ENCODE measurements at regions of chr1 and their contacts with region 1.

Region 1: DNA sequence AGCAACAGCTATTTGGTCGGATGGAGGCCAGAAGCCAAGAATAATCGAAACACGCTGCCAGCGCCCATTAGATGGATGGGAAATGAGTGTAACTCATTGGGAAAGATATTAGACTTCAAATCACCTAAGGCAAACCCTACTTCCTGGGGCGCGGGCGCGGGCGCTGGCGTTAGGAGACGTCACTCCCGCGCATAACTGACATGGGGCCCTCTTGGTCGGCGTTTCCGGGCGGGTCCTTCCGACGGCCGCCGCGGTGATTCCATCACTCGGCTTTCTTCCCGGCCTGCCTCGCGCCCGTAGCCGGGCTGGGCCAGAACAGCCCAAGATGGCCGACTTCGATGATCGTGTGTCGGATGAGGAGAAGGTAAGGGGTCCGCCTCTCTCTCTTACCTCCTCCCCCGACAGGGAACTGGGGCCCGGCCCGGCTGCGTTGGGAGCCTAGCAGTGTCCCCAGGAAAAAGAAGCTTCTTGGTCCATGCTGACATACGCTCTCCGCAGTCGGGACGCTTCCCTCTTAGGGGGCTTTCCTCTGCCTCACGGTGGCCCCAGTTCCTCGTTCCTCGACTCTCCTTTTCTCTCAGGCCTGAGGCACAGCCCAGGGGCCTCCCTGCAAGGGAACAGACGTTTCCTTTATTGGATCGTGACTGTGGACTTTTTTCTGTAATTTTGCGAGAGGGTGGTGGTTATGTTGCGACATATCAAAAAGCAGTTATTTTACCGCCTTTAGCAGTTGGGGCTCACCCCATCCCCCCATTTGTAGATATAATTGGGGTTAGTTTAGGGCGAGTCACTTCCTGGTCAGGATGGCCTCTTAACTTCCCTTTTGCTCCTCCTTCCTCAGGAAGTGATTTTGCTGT is at the start of gene CAPZA1:
- DNase-seq: peak; percentile 93
- H3K4me3 ChIP-seq: peak within 1 kb of the TSS; percentile 83 to 98 (median 85)
- H3K27ac ChIP-seq: peak within 1 kb of the TSS; percentile 96
- H3K4me1 ChIP-seq: peaks cover 19% of the 10 kb centered on the region
- H3K27me3 ChIP-seq: no peaks in the 10 kb centered on the region
- CTCF ChIP-seq: no peak
- total RNA-seq, gene CAPZA1: 188 to 192 TPM

Region 2: DNA sequence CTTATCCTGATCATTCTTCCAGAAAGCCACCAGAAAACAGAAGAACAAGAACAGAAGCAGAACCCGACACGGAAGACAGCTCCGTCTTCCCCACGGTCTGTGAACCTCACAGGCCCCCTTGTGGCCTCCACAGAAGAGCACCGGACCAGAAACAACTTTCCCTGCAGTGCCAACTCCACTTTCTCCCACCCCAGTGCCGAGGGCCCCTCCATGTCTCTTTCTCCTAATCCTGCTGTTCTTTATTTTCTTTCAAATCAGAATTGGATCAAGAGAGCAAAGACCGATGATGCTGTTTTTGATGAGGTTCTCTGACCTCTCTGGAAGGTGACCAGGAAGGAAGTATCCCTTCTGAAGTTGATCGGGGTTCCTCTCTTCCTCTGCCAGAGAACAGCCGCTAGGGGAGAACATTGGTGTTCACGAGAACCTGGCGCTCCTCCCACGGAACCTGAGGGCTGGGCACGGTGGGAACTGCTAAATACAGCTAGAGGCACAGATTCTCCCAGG is 282.7 kb before region 1 on chr1:
- CTCF ChIA-PET with region 1: no interaction called
- dilution Hi-C with region 1: no loop called
- in situ Hi-C with region 1: no loop called
- intact Hi-C with region 1: no loop called
- DNase-seq: peak; percentile 53
- H3K4me3 ChIP-seq: no peak overlapping the region
- H3K27ac ChIP-seq: no peak overlapping the region
- H3K4me1 ChIP-seq: peaks cover 44% of the 10 kb centered on the region
- H3K27me3 ChIP-seq: no peaks in the 10 kb centered on the region
- CTCF ChIP-seq: peak; percentile 51 to 86

Region 3: GRCh38 chr1:112418099-112418892 is 201.5 kb before region 1 on chr1:
- CTCF ChIA-PET with region 1: interaction called, 16 read pairs
- dilution Hi-C with region 1: no loop called
- in situ Hi-C with region 1: no loop called
- intact Hi-C with region 1: no loop called
- DNase-seq: no peak
- H3K4me3 ChIP-seq: no peak overlapping the region
- H3K27ac ChIP-seq: no peak overlapping the region
- H3K4me1 ChIP-seq: no peaks in the 10 kb centered on the region
- H3K27me3 ChIP-seq: no peaks in the 10 kb centered on the region
- CTCF ChIP-seq: no peak

Region 4: DNA sequence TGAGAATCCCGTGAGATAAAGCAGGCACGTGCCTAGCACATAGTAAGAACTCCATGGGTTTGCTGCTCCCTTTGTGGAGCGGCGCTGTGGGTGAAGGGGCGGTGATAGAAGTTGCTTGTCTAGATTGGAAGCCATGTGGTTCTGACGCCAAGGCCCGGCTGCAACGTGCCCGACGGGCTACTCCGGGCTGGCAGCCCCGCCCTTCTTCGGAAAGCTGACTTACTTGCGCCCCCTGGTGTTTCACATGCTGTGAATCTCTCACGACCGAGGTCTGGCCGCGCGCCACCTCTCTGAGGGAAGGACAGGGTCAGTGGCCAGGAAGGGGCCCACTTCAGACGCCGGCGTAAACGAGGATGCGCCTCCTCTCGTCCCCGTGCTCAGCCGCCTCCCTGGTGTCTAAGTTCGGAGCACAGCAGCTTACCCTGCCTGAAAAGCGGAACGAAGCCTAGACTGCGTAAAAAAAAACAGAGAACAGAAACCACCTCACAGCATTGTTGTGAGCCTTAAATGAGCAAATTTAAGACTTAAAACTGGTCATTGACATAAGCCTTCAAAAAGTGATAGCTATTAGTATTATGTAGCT is 153.6 kb before region 1 on chr1:
- CTCF ChIA-PET with region 1: no interaction called
- dilution Hi-C with region 1: no loop called
- in situ Hi-C with region 1: no loop called
- intact Hi-C with region 1: loop called (anchors 2 kb)
- DNase-seq: peak; percentile 84
- H3K4me3 ChIP-seq: peak overlapping the region in 2 of 3 experiments; percentile 21 to 46
- H3K27ac ChIP-seq: no peak overlapping the region
- H3K4me1 ChIP-seq: peaks cover 37% of the 10 kb centered on the region
- H3K27me3 ChIP-seq: no peaks in the 10 kb centered on the region
- CTCF ChIP-seq: peak; percentile 62 to 85

Region 5: GRCh38 chr1:112660072-112660471 is 40.3 kb after region 1 on chr1:
- CTCF ChIA-PET with region 1: no interaction called
- dilution Hi-C with region 1: loop called (anchors 5 kb)
- in situ Hi-C with region 1: no loop called
- intact Hi-C with region 1: no loop called
- DNase-seq: no peak
- H3K4me3 ChIP-seq: no peak overlapping the region
- H3K27ac ChIP-seq: no peak overlapping the region
- H3K4me1 ChIP-seq: no peaks in the 10 kb centered on the region
- H3K27me3 ChIP-seq: no peaks in the 10 kb centered on the region
- CTCF ChIP-seq: no peak

Region 6: GRCh38 chr1:112674439-112674985 is 54.8 kb after region 1 on chr1 and contains the start of gene MOV10:
- CTCF ChIA-PET with region 1: no interaction called
- dilution Hi-C with region 1: no loop called
- in situ Hi-C with region 1: no loop called
- intact Hi-C with region 1: loop called (anchors 1 kb)
- DNase-seq: peak; percentile 76
- H3K4me3 ChIP-seq: peak within 1 kb of the TSS; percentile 69 to 86 (median 72)
- H3K27ac ChIP-seq: peak within 1 kb of the TSS; percentile 78
- H3K4me1 ChIP-seq: peaks cover 22% of the 10 kb centered on the region
- H3K27me3 ChIP-seq: no peaks in the 10 kb centered on the region
- CTCF ChIP-seq: peak in 1 of 2 donors; percentile 13
- total RNA-seq, gene MOV10: 52.2 to 76.0 TPM

Measured in mammary epithelial cell (primary cell).